GM12878 (cell line): ENCODE measurements at regions of chr11 and their contacts with region 1.

Region 1: DNA sequence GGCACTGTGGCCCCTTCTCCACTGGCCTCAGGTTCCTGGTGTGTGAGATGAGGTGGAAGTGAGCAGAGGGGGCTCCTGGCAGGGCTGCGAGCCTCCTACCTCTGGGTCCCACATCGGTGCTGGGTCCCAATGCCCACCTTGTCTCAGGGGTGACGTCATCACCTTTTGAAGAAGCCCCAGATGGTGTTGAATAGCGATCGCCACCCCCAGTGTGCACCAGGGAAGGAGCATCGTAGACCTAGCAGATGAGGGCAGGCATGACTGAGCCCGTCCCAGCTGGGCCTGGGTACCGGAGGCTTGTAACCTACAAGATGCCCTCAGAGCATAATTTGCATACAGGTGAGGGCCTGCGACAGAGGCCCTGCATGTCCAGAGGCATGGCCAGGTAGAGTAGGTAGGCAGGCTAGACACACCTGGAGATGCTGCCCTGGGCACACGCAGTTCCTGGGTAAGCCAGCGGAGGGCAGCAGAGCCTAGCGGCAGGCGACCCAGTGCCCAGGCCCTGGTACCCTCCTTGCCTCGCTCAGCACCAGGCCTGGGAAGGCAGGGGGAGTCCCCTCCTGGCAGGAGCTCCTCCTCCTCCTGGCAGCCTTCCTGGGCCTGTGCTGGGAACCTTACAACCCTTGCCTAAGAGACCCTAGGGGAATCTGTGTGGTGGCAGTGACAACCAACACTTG is 52.5 kb downstream of the TPCN2 start:
- DNase-seq: peak; percentile 20
- ATAC-seq: peak; percentile 92
- H3K4me3 ChIP-seq: no peak overlapping the region
- H3K27ac ChIP-seq: no peak overlapping the region
- H3K4me1 ChIP-seq: no peaks in the 10 kb centered on the region; the same call in 1 of the 2 replicates
- H3K27me3 ChIP-seq: no peaks in the 10 kb centered on the region
- CTCF ChIP-seq: peak; percentile 96 to 100 (median 99)
- EP300 ChIP-seq: no peak
- POLR2A ChIP-seq: no peak
- RAD21 ChIP-seq: peak; percentile 98

Region 2: GRCh38 chr11:69211920-69212571 is 110.8 kb after region 1 on chr11:
- CTCF ChIA-PET with region 1: interaction called, 8 read pairs
- POLR2A ChIA-PET with region 1: no interaction called
- RAD21 ChIA-PET with region 1: no interaction called
- SMC1A ChIA-PET with region 1: interaction called, 3 read pairs
- in situ Hi-C with region 1: no loop called
- intact Hi-C with region 1: loop called (anchors 10 kb)
- DNase-seq: no peak
- ATAC-seq: no peak
- H3K4me3 ChIP-seq: no peak overlapping the region
- H3K27ac ChIP-seq: no peak overlapping the region
- H3K4me1 ChIP-seq: peaks cover 20% of the 10 kb centered on the region
- H3K27me3 ChIP-seq: no peaks in the 10 kb centered on the region; a peak in 1 of 4 replicates
- CTCF ChIP-seq: peak in 2 of 3 experiments; percentile 8 to 26; a peak in 2 of 6 replicates
- EP300 ChIP-seq: no peak
- POLR2A ChIP-seq: no peak
- RAD21 ChIP-seq: peak; percentile 38; the same call in 1 of the 2 replicates

Region 3: DNA sequence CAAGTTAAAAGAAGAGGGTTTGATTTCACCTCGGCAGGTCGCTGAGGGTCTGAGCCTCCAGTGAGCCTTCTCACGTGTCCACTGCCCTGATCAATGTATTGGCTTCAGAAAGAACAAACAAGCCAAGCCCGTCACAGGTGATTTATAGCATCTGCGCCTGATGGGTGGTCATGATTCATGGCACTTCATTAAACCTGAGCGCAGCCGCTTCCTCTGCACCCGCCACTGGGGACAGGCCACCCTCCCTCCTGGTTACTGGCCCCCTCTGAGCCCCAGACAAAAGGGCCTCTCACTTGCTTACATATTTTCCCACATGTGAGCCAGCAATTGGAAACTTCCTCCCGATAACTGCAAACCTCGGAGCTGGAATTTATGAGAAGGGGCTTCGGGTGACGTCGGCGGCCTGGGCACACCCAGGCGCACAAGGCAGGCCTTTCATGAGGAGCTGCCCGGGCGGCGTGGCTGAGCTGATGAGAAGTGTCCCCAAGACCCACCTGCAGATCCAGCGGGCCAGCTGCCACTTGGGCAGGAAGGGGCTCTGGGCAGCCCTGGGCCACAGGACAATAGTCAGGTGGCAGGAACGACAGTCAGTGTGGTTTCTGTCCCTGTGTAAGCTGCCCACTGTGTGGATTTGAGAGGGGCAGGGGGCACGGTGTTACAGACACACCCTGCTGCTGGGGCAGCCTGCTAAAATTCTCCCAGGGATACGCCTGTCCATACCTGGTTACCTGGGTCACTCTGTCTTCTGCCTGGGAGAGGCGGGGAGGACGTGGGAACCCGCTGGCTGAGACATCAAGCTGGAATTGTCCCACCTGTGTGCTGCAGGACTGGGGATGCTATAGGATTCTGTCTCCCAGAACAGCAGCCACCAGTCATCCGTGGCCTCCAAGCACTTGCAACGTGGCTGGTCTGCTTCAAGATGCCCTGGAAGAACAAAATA is 316.2 kb after region 1 on chr11:
- CTCF ChIA-PET with region 1: no interaction called
- POLR2A ChIA-PET with region 1: no interaction called
- RAD21 ChIA-PET with region 1: no interaction called
- SMC1A ChIA-PET with region 1: no interaction called
- in situ Hi-C with region 1: no loop called
- intact Hi-C with region 1: no loop called
- DNase-seq: no peak
- ATAC-seq: no peak
- H3K4me3 ChIP-seq: no peak overlapping the region
- H3K27ac ChIP-seq: no peak overlapping the region
- H3K4me1 ChIP-seq: no peaks in the 10 kb centered on the region
- H3K27me3 ChIP-seq: no peaks in the 10 kb centered on the region; a peak in 1 of 4 replicates
- CTCF ChIP-seq: no peak
- EP300 ChIP-seq: no peak
- POLR2A ChIP-seq: no peak
- RAD21 ChIP-seq: no peak

Region 4: GRCh38 chr11:69642913-69643632 is 541.8 kb after region 1 on chr11:
- CTCF ChIA-PET with region 1: interaction called, 37 read pairs
- POLR2A ChIA-PET with region 1: interaction called, 3 read pairs
- RAD21 ChIA-PET with region 1: interaction called, 25 read pairs
- SMC1A ChIA-PET with region 1: interaction called, 10 read pairs
- in situ Hi-C with region 1: no loop called
- intact Hi-C with region 1: loop called (anchors 1 kb)
- DNase-seq: no peak
- ATAC-seq: peak; percentile 85
- H3K4me3 ChIP-seq: peak overlapping the region; percentile 71; the same call in 1 of the 2 replicates
- H3K27ac ChIP-seq: no peak overlapping the region
- H3K4me1 ChIP-seq: peaks cover 13% of the 10 kb centered on the region
- H3K27me3 ChIP-seq: peaks cover 10 to 23% of the 10 kb centered on the region in 2 experiments
- CTCF ChIP-seq: peak; percentile 87 to 92 (median 88)
- EP300 ChIP-seq: no peak
- POLR2A ChIP-seq: no peak
- RAD21 ChIP-seq: peak; percentile 98

Region 5: GRCh38 chr11:69670158-69670845 is 569.0 kb after region 1 on chr11:
- CTCF ChIA-PET with region 1: interaction called, 31 read pairs
- POLR2A ChIA-PET with region 1: no interaction called
- RAD21 ChIA-PET with region 1: interaction called, 16 read pairs
- SMC1A ChIA-PET with region 1: interaction called, 15 read pairs
- in situ Hi-C with region 1: loop called (anchors 10 kb)
- intact Hi-C with region 1: loop called (anchors 5 kb)
- DNase-seq: no peak
- ATAC-seq: peak; percentile 60
- H3K4me3 ChIP-seq: no peak overlapping the region
- H3K27ac ChIP-seq: no peak overlapping the region
- H3K4me1 ChIP-seq: no peaks in the 10 kb centered on the region; the same call in 1 of the 2 replicates
- H3K27me3 ChIP-seq: no peaks in the 10 kb centered on the region
- CTCF ChIP-seq: peak; percentile 92 to 95 (median 93); a peak in 5 of 6 replicates
- EP300 ChIP-seq: no peak
- POLR2A ChIP-seq: no peak
- RAD21 ChIP-seq: peak; percentile 50